ENCODE measurements at regions of chr20 and their contacts with region 1.

Region 1: GRCh38 chr20:2523919-2524708 is 12.3 kb upstream of the TMC2 start:
- DNase-seq: peak; percentile 40
- H3K4me3 ChIP-seq: peak overlapping the region; percentile 67 to 91 (median 83)
- H3K27ac ChIP-seq: peak overlapping the region; percentile 34
- H3K4me1 ChIP-seq: peaks cover 6% of the 10 kb centered on the region
- H3K27me3 ChIP-seq: no peaks in the 10 kb centered on the region
- CTCF ChIP-seq: peak; percentile 76 to 94

Region 2: DNA sequence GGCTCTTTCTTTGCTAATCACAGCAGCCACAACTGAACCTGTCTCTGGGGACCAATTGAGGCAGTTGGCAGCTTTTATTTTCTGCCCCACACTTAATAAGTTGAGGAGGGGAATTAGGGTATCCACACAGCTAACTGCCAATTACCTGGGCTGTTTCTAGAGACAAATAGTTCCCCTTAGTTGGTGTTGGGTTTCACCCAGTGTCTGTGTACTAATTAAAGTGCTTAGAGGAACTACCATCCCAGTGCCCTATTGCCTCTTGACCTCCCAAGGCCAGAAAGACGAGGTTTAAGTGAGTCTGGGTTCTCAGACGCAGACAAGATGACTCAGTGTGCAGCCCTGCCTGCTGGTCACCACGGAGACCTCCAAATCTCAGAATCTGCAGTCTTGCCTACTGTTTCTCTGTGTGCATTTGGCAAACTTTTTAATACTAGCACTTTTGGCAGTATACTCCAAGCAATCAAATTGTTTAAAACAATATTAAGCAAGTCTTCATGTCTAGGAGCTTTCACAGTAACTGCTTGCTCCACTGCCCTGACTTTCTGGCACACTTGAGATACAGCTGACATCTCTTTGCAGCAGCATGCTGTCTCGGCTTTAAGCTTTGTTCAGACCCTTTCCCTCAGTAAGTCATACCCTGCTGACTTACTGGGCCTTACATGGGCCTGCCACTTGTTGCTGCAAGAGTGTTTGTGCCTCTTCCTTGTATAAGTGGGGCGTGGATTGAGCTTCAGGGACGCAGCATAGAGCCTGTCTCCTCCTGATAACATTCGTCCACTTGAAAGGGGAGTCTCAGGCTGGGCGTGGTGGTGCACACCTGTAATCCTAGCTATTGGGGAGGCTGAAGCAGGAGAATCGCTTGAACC is 390.6 kb before region 1 on chr20:
- CTCF ChIA-PET with region 1: no interaction called
- dilution Hi-C with region 1: no loop called
- in situ Hi-C with region 1: no loop called
- intact Hi-C with region 1: no loop called
- DNase-seq: no peak
- H3K4me3 ChIP-seq: no peak overlapping the region
- H3K27ac ChIP-seq: no peak overlapping the region
- H3K4me1 ChIP-seq: peaks cover 33% of the 10 kb centered on the region
- H3K27me3 ChIP-seq: no peaks in the 10 kb centered on the region
- CTCF ChIP-seq: no peak

Region 3: DNA sequence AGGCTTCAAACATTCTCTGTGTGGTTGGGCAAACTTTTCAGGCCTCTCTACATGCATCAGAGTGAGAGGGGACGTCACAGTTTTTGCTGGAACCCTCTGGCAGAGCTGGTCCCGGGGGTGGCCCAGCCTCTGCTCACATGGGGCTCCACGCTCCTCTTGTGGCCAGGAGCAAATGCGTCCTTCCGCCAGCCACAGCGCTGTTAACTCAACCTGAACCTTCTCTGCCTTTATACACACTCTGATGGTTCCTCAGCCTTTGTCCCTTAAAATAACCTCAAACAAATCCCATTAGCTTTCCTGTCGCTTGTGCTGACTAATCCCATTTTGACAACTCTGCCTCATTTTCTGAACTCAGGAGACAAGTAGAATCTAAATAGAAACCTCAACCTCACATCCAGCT is 182.8 kb before region 1 on chr20:
- CTCF ChIA-PET with region 1: no interaction called
- dilution Hi-C with region 1: no loop called
- in situ Hi-C with region 1: no loop called
- intact Hi-C with region 1: no loop called
- DNase-seq: no peak
- H3K4me3 ChIP-seq: no peak overlapping the region
- H3K27ac ChIP-seq: no peak overlapping the region
- H3K4me1 ChIP-seq: no peaks in the 10 kb centered on the region
- H3K27me3 ChIP-seq: no peaks in the 10 kb centered on the region
- CTCF ChIP-seq: no peak

Region 4: GRCh38 chr20:2643708-2644107 is 119.6 kb after region 1 on chr20:
- CTCF ChIA-PET with region 1: interaction called, 9 read pairs
- dilution Hi-C with region 1: no loop called
- in situ Hi-C with region 1: loop called (anchors 10 to 25 kb)
- intact Hi-C with region 1: loop called (anchors 1 kb)
- DNase-seq: no peak
- H3K4me3 ChIP-seq: no peak overlapping the region
- H3K27ac ChIP-seq: no peak overlapping the region
- H3K4me1 ChIP-seq: no peaks in the 10 kb centered on the region
- H3K27me3 ChIP-seq: no peaks in the 10 kb centered on the region
- CTCF ChIP-seq: no peak

Measured in mammary epithelial cell (primary cell).